CD8-positive, alpha-beta memory T cell (primary cell): ENCODE measurements at regions of chr19 and their contacts with region 1.

Region 1: GRCh38 chr19:4400135-4400936 is at the start of gene SH3GL1:
- DNase-seq: peak; percentile 89 to 94 (median 90)
- H3K4me3 ChIP-seq: peak within 1 kb of the TSS; percentile 92
- H3K4me3 Mint-ChIP-seq: peak within 1 kb of the TSS; percentile 85 to 94 (median 88)
- H3K27ac ChIP-seq: peak within 1 kb of the TSS; percentile 91
- H3K27ac Mint-ChIP-seq: peak within 1 kb of the TSS; percentile 95 to 100 (median 98)
- H3K4me1 ChIP-seq: peaks cover 54% of the 10 kb centered on the region
- H3K4me1 Mint-ChIP-seq: peaks cover 51 to 78% (median 70%) of the 10 kb centered on the region in 3 donors
- H3K27me3 ChIP-seq: no peaks in the 10 kb centered on the region
- H3K27me3 Mint-ChIP-seq: no peaks in the 10 kb centered on the region
- total RNA-seq, gene SH3GL1: 39.8 to 41.2 TPM

Region 2: DNA sequence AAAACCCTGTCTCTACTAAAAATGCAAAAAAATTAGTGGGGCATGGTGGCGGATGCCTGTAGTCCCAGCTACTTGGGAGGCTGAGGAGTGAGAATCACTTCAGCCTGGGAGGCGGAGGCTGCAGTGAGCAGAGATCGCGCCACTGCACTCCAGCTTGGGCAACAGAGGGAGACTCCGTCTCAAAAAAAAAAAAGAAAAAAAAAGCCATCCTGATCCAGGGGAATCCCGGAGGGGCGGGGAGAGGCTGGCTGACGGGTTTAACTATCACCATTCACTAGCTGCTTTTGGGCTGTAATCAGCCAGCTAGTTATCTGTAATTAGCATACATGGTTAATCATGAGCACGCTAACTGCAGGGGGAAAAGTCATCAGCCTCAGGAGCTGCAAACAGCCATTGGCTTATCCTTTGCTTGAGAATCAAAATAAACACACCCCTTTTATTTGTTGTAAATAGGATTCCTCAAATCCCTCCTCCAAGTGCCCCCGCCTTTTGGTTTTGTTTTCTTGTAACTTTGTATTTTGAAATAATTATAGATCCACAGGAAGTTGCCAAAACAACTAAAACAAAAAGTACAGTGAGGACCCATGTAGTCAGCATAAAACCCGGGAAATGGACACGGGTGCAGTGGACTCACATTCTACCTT is 86.4 kb before region 1 on chr19:
- CTCF ChIA-PET with region 1: no interaction called
- POLR2A ChIA-PET with region 1: no interaction called
- DNase-seq: no peak
- H3K4me3 ChIP-seq: no peak overlapping the region
- H3K4me3 Mint-ChIP-seq: no peak overlapping the region
- H3K27ac ChIP-seq: no peak overlapping the region
- H3K27ac Mint-ChIP-seq: no peak overlapping the region
- H3K4me1 ChIP-seq: no peaks in the 10 kb centered on the region
- H3K4me1 Mint-ChIP-seq: no peaks in the 10 kb centered on the region
- H3K27me3 ChIP-seq: no peaks in the 10 kb centered on the region
- H3K27me3 Mint-ChIP-seq: no peaks in the 10 kb centered on the region

Region 3: DNA sequence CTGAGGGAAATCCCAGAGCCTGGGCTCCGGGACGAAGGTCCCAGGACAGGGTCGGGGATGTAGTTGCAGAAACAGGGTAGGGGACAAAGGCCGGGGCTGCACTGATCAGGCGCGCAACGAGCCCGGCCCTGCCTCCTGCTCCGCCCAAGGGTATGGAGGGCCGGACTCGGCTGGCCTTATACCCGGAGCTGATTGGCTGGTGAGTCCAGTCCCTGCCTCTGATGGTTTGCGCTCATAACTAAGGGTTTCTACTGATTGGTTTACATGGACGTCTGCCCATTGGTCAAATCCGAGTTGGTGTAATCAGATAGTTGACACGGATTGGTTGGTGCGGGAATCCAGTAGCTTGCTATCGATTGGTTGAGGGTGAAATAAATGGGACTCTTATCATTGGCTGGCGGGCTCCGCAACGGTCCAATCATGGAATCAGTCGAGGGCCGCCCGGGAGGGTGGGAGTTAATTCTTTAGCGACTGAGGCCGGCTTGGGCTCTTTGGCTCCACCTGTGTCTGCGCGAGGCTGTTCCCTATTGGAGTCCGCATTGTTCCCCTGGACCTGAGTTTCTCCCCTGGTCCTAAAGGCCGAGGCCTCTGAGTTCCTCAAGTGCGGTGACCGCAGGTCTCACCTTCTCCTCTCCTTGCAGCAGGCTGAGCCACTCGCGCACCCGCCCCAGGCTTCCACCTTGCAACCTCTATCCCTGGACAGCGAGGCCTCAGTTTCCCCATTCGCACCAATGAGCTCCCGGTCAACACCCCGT is 57.5 kb before region 1 on chr19:
- CTCF ChIA-PET with region 1: interaction called, 18 read pairs
- POLR2A ChIA-PET with region 1: interaction called, 10 read pairs
- DNase-seq: peak; percentile 83 to 95 (median 92)
- H3K4me3 ChIP-seq: peak overlapping the region; percentile 92
- H3K4me3 Mint-ChIP-seq: peak overlapping the region; percentile 80 to 96 (median 91)
- H3K27ac ChIP-seq: peak overlapping the region; percentile 80
- H3K27ac Mint-ChIP-seq: peak overlapping the region; percentile 82 to 99 (median 92)
- H3K4me1 ChIP-seq: peaks cover 22% of the 10 kb centered on the region
- H3K4me1 Mint-ChIP-seq: peaks cover 29 to 46% (median 38%) of the 10 kb centered on the region in 3 donors
- H3K27me3 ChIP-seq: no peaks in the 10 kb centered on the region
- H3K27me3 Mint-ChIP-seq: peaks cover 0 to 3% of the 10 kb centered on the region in 2 donors

Region 4: DNA sequence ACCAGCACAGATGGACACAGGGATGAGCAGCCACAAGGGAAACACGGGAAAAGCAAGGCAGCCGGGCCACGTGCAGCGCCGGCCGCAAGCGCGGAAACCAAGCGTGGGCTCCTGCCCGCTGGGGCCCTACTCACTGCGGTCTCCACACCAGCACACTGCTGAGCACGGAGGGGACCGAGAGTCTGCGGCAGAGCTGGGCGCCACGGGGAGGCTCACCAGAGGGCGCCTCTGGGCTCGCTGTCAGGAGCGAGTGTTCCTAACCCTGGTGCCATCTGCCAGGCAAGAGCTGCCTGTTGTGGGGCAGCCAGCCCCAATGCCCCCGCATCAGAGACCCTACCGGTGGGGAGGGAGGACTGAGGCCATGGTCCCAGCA is 30.5 kb before region 1 on chr19:
- CTCF ChIA-PET with region 1: interaction called, 10 read pairs
- POLR2A ChIA-PET with region 1: interaction called, 9 read pairs
- DNase-seq: peak; percentile 60 to 81 (median 63)
- H3K4me3 ChIP-seq: peak overlapping the region; percentile 75
- H3K4me3 Mint-ChIP-seq: peak overlapping the region; percentile 80 to 97 (median 90)
- H3K27ac ChIP-seq: peak overlapping the region; percentile 77
- H3K27ac Mint-ChIP-seq: peak overlapping the region; percentile 79 to 99 (median 92)
- H3K4me1 ChIP-seq: peaks cover 48% of the 10 kb centered on the region
- H3K4me1 Mint-ChIP-seq: peaks cover 29 to 52% (median 32%) of the 10 kb centered on the region in 3 donors
- H3K27me3 ChIP-seq: no peaks in the 10 kb centered on the region
- H3K27me3 Mint-ChIP-seq: peaks cover 0 to 1% of the 10 kb centered on the region in 2 donors

Region 5: DNA sequence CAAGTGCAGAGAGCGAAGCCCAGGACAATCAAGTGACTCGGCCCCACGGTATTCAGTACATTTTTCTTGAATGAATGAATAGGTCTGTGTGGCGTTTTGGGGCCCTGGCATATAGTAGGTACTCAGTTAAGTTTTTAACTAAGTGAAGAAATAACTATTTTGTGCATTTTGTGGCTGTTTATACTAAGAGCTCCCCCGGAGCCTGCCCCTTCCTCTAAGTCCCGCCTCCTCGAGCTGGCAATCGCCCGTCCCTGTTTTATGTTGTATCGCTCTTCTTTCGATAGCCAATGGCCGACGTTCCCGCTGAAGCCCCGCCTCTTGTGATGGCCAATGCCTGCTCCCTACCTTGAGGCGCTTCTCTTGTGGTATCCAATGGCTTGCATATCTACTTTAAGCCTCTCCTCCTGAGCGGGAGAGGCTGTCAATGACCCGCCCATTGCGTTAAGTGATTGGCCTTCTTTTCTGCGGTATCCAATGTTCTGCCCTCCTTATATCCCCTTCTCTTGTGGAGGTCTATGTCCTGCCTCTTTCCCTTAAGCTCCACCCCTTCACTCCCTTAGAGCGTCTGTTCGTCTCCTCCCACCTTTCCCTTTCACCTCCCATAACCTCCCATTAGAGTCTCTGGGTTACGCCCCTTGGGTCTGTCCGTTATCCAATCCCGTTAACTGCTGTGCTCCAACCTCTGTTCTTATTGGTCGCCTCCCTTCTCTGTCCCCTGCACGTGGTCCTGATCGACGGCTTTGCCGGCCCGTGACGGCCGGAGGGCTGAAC is 71.3 kb after region 1 on chr19:
- CTCF ChIA-PET with region 1: interaction called, 3 read pairs
- POLR2A ChIA-PET with region 1: interaction called, 11 read pairs
- DNase-seq: peak; percentile 95 to 99 (median 98)
- H3K4me3 ChIP-seq: peak overlapping the region; percentile 61
- H3K4me3 Mint-ChIP-seq: no peak overlapping the region
- H3K27ac ChIP-seq: peak overlapping the region; percentile 71
- H3K27ac Mint-ChIP-seq: no peak overlapping the region
- H3K4me1 ChIP-seq: peaks cover 17% of the 10 kb centered on the region
- H3K4me1 Mint-ChIP-seq: peaks cover 15 to 25% (median 22%) of the 10 kb centered on the region in 3 donors
- H3K27me3 ChIP-seq: no peaks in the 10 kb centered on the region
- H3K27me3 Mint-ChIP-seq: no peaks in the 10 kb centered on the region